Activated CD4-positive, alpha-beta memory T cell treated with anti-CD3 and anti-CD28 coated beads, Interleukin-2, amount 10 ng/mL, durations not matched to agents 7 days and 5 days (primary cell): ENCODE measurements at regions of chr1 and their contacts with region 1.

Region 1: GRCh38 chr1:201436393-201436792 is 14.9 kb upstream of the TNNI1 start:
- DNase-seq: no peak
- H3K4me3 Mint-ChIP-seq: no peak overlapping the region
- H3K27ac Mint-ChIP-seq: no peak overlapping the region
- H3K4me1 Mint-ChIP-seq: peaks cover 4% of the 10 kb centered on the region
- H3K27me3 Mint-ChIP-seq: peaks cover 34% of the 10 kb centered on the region

Region 2: DNA sequence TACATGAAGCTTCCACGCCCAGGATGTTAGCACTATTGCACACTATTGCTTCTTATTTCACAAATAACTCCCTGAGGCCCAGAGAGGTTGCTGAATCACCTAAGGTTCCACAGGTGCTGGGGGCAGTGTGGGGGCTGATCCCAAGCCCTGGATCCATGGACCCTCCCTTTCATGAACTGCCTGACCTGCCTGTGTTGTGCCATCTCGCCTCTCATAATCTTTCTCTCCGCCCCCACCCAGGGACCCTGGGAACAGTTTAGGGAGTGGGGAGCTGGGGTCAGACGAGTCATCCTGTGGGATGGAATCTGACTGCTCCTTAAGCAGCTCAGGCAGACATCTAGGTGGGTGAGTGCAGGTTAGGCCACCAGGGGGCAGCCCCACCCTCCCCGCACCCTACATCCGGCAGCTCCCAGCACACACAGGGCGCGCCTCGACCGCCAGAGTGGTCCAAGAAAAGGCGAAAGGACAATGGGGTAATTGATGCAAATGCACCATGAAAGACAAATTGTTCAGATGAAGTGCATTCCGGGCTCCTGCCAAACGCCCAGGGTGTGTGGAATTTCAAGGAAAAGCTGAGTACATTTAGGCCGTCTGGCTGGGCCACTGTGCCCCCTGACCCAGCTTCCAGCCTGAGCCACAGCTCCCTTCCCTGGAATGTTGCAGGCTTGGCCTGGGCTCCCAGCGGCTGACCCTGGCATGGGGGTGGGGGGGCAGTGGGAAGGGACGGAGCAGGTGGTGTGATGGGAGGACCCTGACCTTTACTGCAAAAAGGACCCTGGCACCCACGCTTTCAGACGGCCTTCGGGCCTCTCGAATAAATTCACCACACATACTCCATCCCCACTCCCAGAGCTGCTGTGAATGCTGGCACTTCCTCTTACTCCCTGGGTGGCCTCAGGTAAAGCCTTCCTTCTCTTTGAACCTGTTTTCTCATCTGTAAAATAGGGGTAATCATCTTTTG is 11.8 kb after region 1 on chr1:
- CTCF ChIA-PET with region 1: interaction called, 36 read pairs
- POLR2A ChIA-PET with region 1: no interaction called
- DNase-seq: peak; percentile 78
- H3K4me3 Mint-ChIP-seq: no peak overlapping the region
- H3K27ac Mint-ChIP-seq: no peak overlapping the region
- H3K4me1 Mint-ChIP-seq: peaks cover 37% of the 10 kb centered on the region
- H3K27me3 Mint-ChIP-seq: peaks cover 25% of the 10 kb centered on the region